Esophagus squamous epithelium (tissue), 5 donors: ENCODE measurements at regions of chr16 and their contacts with region 1.

Region 1: DNA sequence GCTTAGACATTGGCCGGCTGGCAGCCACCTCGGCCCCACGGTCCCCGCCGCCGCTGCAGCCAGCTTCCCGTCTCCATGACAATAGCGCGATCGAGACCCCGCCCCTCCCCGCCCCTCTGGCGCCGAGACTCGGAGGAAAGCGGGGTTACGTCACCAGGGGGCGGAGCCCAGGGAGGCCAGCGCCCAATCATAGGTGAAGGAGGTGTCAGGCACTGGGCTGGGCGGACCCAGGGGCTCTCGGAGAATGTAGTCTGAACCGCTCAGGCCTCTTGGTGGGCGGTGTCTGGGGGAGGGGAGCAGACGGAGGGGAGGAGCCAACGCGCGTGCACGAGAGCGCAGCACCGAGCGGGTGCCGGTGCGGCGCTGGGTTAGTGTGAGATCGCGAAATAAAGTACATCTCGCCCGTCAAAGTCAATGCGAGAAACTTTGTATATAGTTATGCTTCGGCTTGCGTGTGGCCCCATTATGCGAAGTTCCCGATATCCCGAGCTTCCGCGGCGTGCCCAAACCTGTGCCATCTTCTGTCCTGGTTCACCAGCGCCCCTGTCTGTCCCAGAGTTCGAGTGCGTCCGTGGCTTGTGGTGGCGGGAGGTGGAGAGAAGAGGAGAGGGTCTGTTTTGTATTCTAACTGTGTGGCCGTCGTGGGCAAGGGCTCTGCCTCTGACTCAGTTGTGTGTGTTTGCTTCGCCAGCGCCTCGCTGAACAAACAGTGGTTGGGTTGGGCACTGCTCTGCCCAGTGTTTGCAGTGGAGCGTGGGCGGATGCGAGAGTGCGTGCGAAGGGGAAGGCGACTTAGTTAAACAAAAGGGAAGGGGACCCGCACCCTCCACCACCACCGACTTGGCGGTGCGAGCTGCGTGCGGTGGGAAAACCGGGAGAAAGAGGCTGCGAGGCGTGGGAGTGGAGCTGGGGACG is 1.3 kb upstream of the IRX5 start:
- DNase-seq: peak; percentile 82
- H3K4me3 ChIP-seq: peak overlapping the region; percentile 52 to 79 (median 68)
- H3K27ac ChIP-seq: peak overlapping the region; percentile 91 to 94 (median 92)
- H3K4me1 ChIP-seq: peaks cover 7 to 92% (median 16%) of the 10 kb centered on the region in 3 donors
- H3K27me3 ChIP-seq: peaks cover 0 to 94% (median 25%) of the 10 kb centered on the region in 4 donors
- CTCF ChIP-seq: peak in 3 of 6 experiments; percentile 14 to 45 (median 16)
- POLR2A ChIP-seq: peak in 1 of 4 donors; percentile 68

Region 2: GRCh38 chr16:54286090-54286993 is 643.0 kb before region 1 on chr16 and contains the start of gene IRX3:
- intact Hi-C with region 1: loop called (anchors 5 kb)
- DNase-seq: no peak
- H3K4me3 ChIP-seq: peak within 1 kb of the TSS; percentile 63 to 81 (median 73)
- H3K27ac ChIP-seq: peak within 1 kb of the TSS; percentile 90 to 97 (median 94)
- H3K4me1 ChIP-seq: peaks cover 20 to 83% (median 38%) of the 10 kb centered on the region in 3 donors
- H3K27me3 ChIP-seq: peaks cover 0 to 100% (median 22%) of the 10 kb centered on the region in 4 donors
- CTCF ChIP-seq: no peak
- POLR2A ChIP-seq: peak in 1 of 4 donors; percentile 43
- total RNA-seq, gene IRX3: 18.1 to 27.4 (median 26.4) TPM

Region 3: DNA sequence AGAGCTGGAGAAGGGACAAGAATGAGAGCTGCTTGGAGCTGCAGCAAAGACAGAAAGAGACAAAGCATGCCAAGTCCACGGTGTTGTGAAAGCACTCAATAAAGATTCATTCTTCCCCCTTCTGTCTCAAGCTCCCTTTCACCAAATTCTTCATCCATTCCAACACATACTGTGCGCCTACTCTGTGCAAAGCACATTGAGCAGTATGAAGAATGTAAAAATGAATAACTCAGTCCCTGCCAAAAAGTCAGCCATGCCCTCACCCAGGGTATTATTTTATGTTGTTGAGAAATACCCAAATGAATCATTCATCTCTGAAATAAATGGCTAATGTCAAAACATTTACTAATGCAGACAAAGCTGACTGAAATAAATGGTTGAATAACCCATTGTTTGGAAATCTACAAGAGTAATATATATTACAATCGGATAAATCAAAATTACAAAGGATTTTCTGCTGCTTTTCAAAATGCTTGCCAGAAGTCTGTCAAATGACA is 281.6 kb before region 1 on chr16:
- intact Hi-C with region 1: loop called (anchors 5 kb)
- DNase-seq: no peak
- H3K4me3 ChIP-seq: no peak overlapping the region
- H3K27ac ChIP-seq: peak overlapping the region; percentile 61 to 77 (median 70)
- H3K4me1 ChIP-seq: peaks cover 0 to 80% (median 8%) of the 10 kb centered on the region in 3 donors
- H3K27me3 ChIP-seq: peaks cover 0 to 23% (median 0%) of the 10 kb centered on the region in 4 donors
- CTCF ChIP-seq: no peak
- POLR2A ChIP-seq: no peak

Region 4: DNA sequence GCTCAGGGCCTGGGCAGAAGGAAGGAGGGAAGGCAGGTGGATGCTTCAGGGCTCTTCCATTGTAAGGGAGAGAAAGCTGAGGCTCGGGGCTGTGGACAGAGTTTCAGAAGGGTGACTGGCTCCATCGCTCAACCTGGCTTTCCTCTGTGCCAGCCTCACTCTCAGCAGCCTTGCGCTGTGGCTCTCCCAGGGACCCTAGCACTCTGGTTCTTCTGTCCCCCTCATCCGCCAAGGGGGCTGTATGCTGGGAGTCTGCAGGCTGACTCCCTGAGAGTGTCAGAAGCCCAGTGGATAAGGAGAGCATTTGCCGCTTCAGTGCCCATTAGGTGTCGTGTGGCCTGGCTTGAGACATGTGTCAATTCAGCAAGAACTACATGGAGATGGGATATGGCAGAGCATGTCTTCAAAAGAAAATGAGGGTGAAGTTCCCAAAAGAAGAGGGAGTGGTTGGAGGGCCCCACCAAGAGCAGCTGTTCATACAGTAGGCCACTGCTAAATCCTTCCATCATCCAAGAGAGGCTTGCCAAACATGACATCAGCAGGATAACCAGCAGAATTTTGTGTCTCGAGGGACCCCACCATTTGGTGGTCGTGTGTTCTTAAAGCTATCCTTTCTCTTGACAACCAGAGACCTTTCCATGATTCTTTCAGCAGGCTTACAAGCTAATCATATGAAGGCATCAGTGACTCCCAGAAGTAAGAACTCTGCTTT is 149.5 kb after region 1 on chr16:
- intact Hi-C with region 1: no loop called
- DNase-seq: no peak
- H3K4me3 ChIP-seq: no peak overlapping the region
- H3K27ac ChIP-seq: no peak overlapping the region
- H3K4me1 ChIP-seq: no peaks in the 10 kb centered on the region
- H3K27me3 ChIP-seq: no peaks in the 10 kb centered on the region
- CTCF ChIP-seq: no peak
- POLR2A ChIP-seq: no peak